CD14-positive monocyte (primary cell): ENCODE measurements at regions of chr22 and their contacts with region 1.

Region 1: GRCh38 chr22:37953437-37954179 is at the starts of genes C22orf23 and POLR2F:
- DNase-seq: peak; percentile 93 to 99 (median 94)
- H3K4me3 ChIP-seq: peak within 1 kb of the TSS; percentile 63 to 100 (median 95)
- H3K4me3 Mint-ChIP-seq: peak within 1 kb of the TSS; percentile 94 to 100
- H3K27ac ChIP-seq: peak within 1 kb of the TSS; percentile 35 to 87
- H3K27ac Mint-ChIP-seq: peak within 1 kb of the TSS; percentile 92 to 99 (median 96)
- H3K4me1 ChIP-seq: peaks cover 22 to 23% of the 10 kb centered on the region in 2 donors
- H3K4me1 Mint-ChIP-seq: peaks cover 26% of the 10 kb centered on the region
- H3K27me3 ChIP-seq: peaks cover 9 to 14% of the 10 kb centered on the region in 2 donors
- H3K27me3 Mint-ChIP-seq: peaks cover 16 to 24% (median 21%) of the 10 kb centered on the region in 3 donors
- CTCF ChIP-seq: no peak
- polyA plus RNA-seq, gene C22orf23: not detected
- polyA plus RNA-seq, gene POLR2F: 45.4 to 182 (median 143) TPM

Region 2: DNA sequence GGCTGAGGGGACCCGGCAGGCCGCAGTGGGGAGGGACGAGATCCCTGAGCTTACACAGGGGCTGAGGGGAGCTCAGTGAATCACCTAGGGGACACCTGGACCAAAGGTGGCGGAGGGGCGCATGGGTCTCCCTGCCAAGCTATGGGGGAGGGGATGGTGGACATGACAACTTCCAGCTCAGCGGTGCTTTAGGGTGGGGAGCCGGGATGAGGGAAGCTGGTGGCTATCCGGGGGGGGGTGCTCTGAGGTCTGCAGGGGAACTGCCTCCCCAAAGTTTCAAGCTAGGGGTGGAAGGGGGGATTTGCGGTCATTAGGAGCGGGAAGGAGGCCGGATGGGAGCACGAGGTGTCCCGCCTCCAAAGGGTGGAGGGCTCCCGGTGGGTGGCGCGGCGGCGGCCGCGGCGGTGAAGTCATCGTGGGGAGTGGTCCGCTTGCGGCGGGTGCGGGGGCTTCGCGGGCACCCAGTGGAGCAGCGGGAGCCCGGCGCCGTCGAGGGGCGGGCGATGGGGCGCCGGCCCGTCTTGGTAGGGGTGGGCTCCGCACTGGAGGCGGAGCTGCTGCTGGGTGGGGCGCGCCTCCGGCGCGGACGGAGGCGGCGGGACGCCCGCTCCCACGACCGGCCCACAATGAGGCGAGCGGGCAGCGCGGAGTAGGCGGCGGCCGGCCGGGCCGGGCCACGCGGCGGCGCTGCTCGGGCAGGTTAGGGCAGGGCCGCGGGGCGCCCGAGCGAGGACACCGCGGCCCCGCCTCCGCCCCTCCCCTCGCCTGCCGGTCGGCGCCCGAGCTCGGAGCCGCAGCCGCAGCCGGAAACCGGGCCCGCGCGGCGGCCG is 47.9 kb before region 1 on chr22 and contains the start of gene MICALL1:
- intact Hi-C with region 1: loop called in 1 of 2 experiments (anchors 5 kb)
- DNase-seq: peak; percentile 43 to 71 (median 65)
- H3K4me3 ChIP-seq: peak within 1 kb of the TSS; percentile 35 to 78 (median 59)
- H3K4me3 Mint-ChIP-seq: peak within 1 kb of the TSS; percentile 80 to 85
- H3K27ac ChIP-seq: peak within 1 kb of the TSS in 1 of 2 donors; percentile 51
- H3K27ac Mint-ChIP-seq: peak within 1 kb of the TSS; percentile 57 to 88 (median 68)
- H3K4me1 ChIP-seq: peaks cover 13 to 23% of the 10 kb centered on the region in 2 donors
- H3K4me1 Mint-ChIP-seq: peaks cover 33% of the 10 kb centered on the region
- H3K27me3 ChIP-seq: no peaks in the 10 kb centered on the region
- H3K27me3 Mint-ChIP-seq: peaks cover 4 to 12% (median 9%) of the 10 kb centered on the region in 3 donors
- CTCF ChIP-seq: peak; percentile 24
- polyA plus RNA-seq, gene MICALL1: 0.51 to 7.0 (median 1.3) TPM

Region 3: GRCh38 chr22:38327805-38328204 is 374.2 kb after region 1 on chr22:
- intact Hi-C with region 1: loop called in 1 of 2 experiments (anchors 10 kb)
- DNase-seq: no peak
- H3K4me3 ChIP-seq: no peak overlapping the region
- H3K4me3 Mint-ChIP-seq: peak overlapping the region in 1 of 2 donors; percentile 8
- H3K27ac ChIP-seq: no peak overlapping the region
- H3K27ac Mint-ChIP-seq: peak overlapping the region in 1 of 7 donors; percentile 50
- H3K4me1 ChIP-seq: no peaks in the 10 kb centered on the region
- H3K4me1 Mint-ChIP-seq: no peaks in the 10 kb centered on the region
- H3K27me3 ChIP-seq: no peaks in the 10 kb centered on the region
- H3K27me3 Mint-ChIP-seq: peaks cover 0 to 11% (median 5%) of the 10 kb centered on the region in 3 donors
- CTCF ChIP-seq: no peak